Dendritic cell treated with granulocyte-macrophage colony-stimulating factor and Interleukin-4, amounts not matched to agents 40 ng/mL and 50 ng/mL, for 4 days (primary cell): ENCODE measurements at regions of chr1 and their contacts with region 1.

Region 1: DNA sequence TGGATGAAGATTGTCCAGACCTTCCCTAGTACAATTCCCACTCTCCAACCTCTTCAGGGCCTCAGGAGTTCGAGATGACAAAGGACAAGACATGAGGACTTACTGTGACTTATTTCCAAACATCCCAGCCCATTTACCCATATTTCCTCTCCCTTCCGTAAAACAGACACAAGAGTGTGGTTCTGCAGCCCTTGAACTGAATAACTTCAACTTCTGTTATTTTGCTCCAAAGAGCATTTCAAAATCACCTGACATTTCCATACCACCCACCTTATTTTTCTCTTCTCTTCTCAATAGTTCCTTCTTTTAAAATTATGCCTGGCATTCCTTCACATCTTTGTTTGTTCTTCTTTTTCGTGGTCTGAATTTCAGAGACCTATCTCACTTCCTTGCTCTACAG is 8.7 kb upstream of the OR10K2 start:
- H3K4me3 Mint-ChIP-seq: no peak overlapping the region
- H3K27ac Mint-ChIP-seq: no peak overlapping the region
- H3K4me1 Mint-ChIP-seq: peaks cover 40% of the 10 kb centered on the region
- H3K27me3 Mint-ChIP-seq: no peaks in the 10 kb centered on the region

Region 2: DNA sequence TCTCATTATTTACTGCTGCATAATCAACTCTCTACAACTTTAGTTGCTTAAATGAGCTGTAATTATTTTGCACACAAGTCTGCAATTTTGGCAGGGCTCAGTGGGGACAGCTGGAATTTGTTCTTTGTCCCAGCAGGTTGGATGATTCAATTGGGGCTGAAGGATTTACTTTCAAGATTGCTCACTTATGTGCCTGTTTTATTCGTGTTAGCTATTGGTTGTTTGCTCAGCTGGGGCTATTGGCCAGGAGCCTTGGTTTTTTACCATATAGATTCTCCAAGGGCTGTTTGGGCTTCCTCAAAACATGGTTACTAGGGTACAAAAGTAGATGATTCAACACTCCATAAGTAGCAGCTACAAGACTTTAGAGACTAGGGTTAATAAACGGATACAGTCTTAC is 50.7 kb after region 1 on chr1:
- intact Hi-C with region 1: loop called (anchors 5 kb)
- H3K4me3 Mint-ChIP-seq: no peak overlapping the region
- H3K27ac Mint-ChIP-seq: no peak overlapping the region
- H3K4me1 Mint-ChIP-seq: peaks cover 6% of the 10 kb centered on the region
- H3K27me3 Mint-ChIP-seq: peaks cover 3% of the 10 kb centered on the region